ENCODE measurements at regions of chr3 and their contacts with region 1.

Region 1: DNA sequence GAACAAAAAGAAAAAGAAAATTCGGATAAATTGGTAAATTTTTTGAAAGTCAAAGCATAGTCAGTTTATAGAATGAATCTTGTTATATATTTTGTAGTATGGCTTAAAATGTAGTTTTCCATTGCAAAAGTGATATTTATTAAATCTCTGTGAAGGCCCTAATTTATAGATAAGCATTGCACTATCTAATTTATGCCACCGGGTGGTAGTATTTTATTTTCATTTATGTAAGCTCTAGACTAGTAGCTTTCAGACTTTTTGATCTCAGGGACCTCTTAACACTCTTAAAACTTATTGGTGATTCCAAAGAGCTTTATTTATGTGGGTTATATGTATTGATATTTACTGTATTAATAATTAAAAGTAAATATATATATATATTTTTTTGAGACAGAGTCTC is 133.9 kb upstream of the LRRFIP2 start:
- DNase-seq: no peak
- H3K4me3 ChIP-seq: no peak overlapping the region
- H3K27ac ChIP-seq: no peak overlapping the region
- H3K4me1 ChIP-seq: no peaks in the 10 kb centered on the region
- H3K27me3 ChIP-seq: no peaks in the 10 kb centered on the region
- CTCF ChIP-seq: peak in 2 of 4 experiments; percentile 28 to 36
- POLR2A ChIP-seq: no peak

Region 2: GRCh38 chr3:37139567-37140052 is 168.6 kb before region 1 on chr3:
- intact Hi-C with region 1: no loop called
- DNase-seq: no peak
- H3K4me3 ChIP-seq: no peak overlapping the region
- H3K27ac ChIP-seq: peak overlapping the region in 1 of 2 donors; percentile 71
- H3K4me1 ChIP-seq: no peaks in the 10 kb centered on the region
- H3K27me3 ChIP-seq: no peaks in the 10 kb centered on the region
- CTCF ChIP-seq: no peak
- POLR2A ChIP-seq: no peak

Region 3: GRCh38 chr3:37262888-37263287 is 45.4 kb before region 1 on chr3:
- intact Hi-C with region 1: no loop called
- DNase-seq: no peak
- H3K4me3 ChIP-seq: no peak overlapping the region
- H3K27ac ChIP-seq: no peak overlapping the region
- H3K4me1 ChIP-seq: no peaks in the 10 kb centered on the region
- H3K27me3 ChIP-seq: no peaks in the 10 kb centered on the region
- CTCF ChIP-seq: no peak
- POLR2A ChIP-seq: no peak

Region 4: GRCh38 chr3:37397396-37397795 is 89.1 kb after region 1 on chr3:
- intact Hi-C with region 1: loop called (anchors 10 kb)
- DNase-seq: no peak
- H3K4me3 ChIP-seq: no peak overlapping the region
- H3K27ac ChIP-seq: no peak overlapping the region
- H3K4me1 ChIP-seq: no peaks in the 10 kb centered on the region
- H3K27me3 ChIP-seq: no peaks in the 10 kb centered on the region
- CTCF ChIP-seq: no peak
- POLR2A ChIP-seq: no peak

Region 5: DNA sequence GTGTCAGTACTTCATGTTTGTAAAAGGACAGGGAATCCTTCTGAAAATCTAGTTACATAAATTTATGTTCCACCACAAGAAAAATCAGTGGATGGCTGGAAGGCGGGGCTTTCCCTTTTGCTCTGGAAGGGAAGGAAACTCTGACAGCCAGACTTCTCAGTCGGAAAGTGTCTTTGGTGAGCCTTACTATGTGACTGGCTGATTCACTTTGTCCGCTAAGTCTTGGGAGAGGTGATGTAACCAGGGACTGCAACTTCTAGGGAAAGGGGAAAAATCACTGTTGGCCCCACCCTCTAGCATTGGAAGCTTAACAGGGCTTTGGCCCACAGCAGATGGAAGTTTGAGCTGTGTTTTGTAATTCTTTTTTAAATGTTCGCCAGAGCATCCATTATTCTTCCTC is 272.0 kb after region 1 on chr3:
- intact Hi-C with region 1: no loop called
- DNase-seq: no peak
- H3K4me3 ChIP-seq: no peak overlapping the region
- H3K27ac ChIP-seq: no peak overlapping the region
- H3K4me1 ChIP-seq: no peaks in the 10 kb centered on the region
- H3K27me3 ChIP-seq: no peaks in the 10 kb centered on the region
- CTCF ChIP-seq: no peak
- POLR2A ChIP-seq: no peak

Measured in prostate gland (tissue), 2 donors.